Right cardiac atrium (tissue), 5 donors: ENCODE measurements at regions of chr6 and their contacts with region 1.

Region 1: GRCh38 chr6:99241905-99242534 is 107.5 kb downstream of the FAXC start:
- DNase-seq: no peak
- ATAC-seq: no peak
- H3K4me3 ChIP-seq: no peak overlapping the region
- H3K27ac ChIP-seq: no peak overlapping the region
- H3K4me1 ChIP-seq: no peaks in the 10 kb centered on the region
- H3K27me3 ChIP-seq: no peaks in the 10 kb centered on the region

Region 2: GRCh38 chr6:99151634-99152344 is 90.2 kb before region 1 on chr6:
- intact Hi-C with region 1: loop called in 3 of 4 experiments (anchors 5 kb)
- DNase-seq: peak in 2 of 3 donors; percentile 21 to 32
- ATAC-seq: no peak
- H3K4me3 ChIP-seq: no peak overlapping the region
- H3K27ac ChIP-seq: no peak overlapping the region
- H3K4me1 ChIP-seq: no peaks in the 10 kb centered on the region
- H3K27me3 ChIP-seq: no peaks in the 10 kb centered on the region